ENCODE measurements at regions of chr19 and their contacts with region 1.

Region 1: GRCh38 chr19:34662919-34663318 is 14.0 kb downstream of the SCGB2B2 start:
- DNase-seq: peak in 1 of 2 experiments; percentile 19
- H3K4me3 ChIP-seq: no peak overlapping the region
- H3K27ac ChIP-seq: no peak overlapping the region
- H3K4me1 ChIP-seq: no peaks in the 10 kb centered on the region
- H3K27me3 ChIP-seq: no peaks in the 10 kb centered on the region
- CTCF ChIP-seq: peak; percentile 59 to 75 (median 63)
- EP300 ChIP-seq: no peak
- POLR2A ChIP-seq: no peak
- RAD21 ChIP-seq: peak; percentile 42 to 45

Region 2: GRCh38 chr19:34677386-34678084 is 14.6 kb after region 1 on chr19 and contains the start of gene ZNF302:
- CTCF ChIA-PET with region 1: interaction called, 9 read pairs
- POLR2A ChIA-PET with region 1: interaction called, 11 read pairs
- DNase-seq: peak; percentile 92
- H3K4me3 ChIP-seq: peak within 1 kb of the TSS; percentile 71 to 90 (median 75)
- H3K27ac ChIP-seq: peak within 1 kb of the TSS; percentile 91
- H3K4me1 ChIP-seq: peaks cover 0 to 3% (median 2%) of the 10 kb centered on the region in 4 experiments; a peak in 4 of 7 replicates
- H3K27me3 ChIP-seq: peaks cover 0 to 2% (median 0%) of the 10 kb centered on the region in 4 experiments; a peak in 3 of 7 replicates
- CTCF ChIP-seq: no peak
- EP300 ChIP-seq: no peak
- POLR2A ChIP-seq: peak; percentile 82 to 96
- RAD21 ChIP-seq: no peak
- total RNA-seq, gene ZNF302: 17.0 and 20.4 TPM in 2 replicates